ENCODE measurements at regions of chr6 and their contacts with region 1.

Region 1: GRCh38 chr6:68778356-68779020 is 143.4 kb downstream of the ADGRB3 start:
- DNase-seq: peak; percentile 53
- H3K4me3 Mint-ChIP-seq: no peak overlapping the region
- H3K27ac Mint-ChIP-seq: no peak overlapping the region
- H3K4me1 Mint-ChIP-seq: no peaks in the 10 kb centered on the region
- H3K27me3 Mint-ChIP-seq: peaks cover 67% of the 10 kb centered on the region
- CTCF ChIP-seq: peak; percentile 52

Region 2: DNA sequence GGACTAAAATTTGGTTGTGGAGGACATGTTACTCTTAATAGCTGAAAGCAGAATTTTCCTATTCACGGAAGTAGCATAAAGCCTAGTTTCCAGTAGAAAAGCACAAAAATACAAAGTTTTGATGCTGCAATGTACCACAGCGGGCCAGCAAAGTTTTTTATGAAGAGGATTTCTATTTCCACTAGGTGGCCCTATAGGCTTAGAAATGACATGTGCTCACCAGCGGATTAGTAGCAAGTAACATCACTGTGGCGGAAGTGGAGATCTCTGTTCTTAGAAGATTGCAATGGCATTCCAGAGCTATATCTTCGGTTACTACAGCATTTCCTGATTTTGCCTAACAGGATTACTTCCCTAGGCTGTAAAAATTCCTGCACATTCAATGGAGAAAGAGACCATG is 1852.4 kb before region 1 on chr6:
- CTCF ChIA-PET with region 1: no interaction called
- POLR2A ChIA-PET with region 1: no interaction called
- intact Hi-C with region 1: loop called (anchors 5 kb)
- DNase-seq: no peak
- H3K4me3 Mint-ChIP-seq: no peak overlapping the region
- H3K27ac Mint-ChIP-seq: no peak overlapping the region
- H3K4me1 Mint-ChIP-seq: peaks cover 13% of the 10 kb centered on the region
- H3K27me3 Mint-ChIP-seq: no peaks in the 10 kb centered on the region
- CTCF ChIP-seq: peak; percentile 28

Region 3: DNA sequence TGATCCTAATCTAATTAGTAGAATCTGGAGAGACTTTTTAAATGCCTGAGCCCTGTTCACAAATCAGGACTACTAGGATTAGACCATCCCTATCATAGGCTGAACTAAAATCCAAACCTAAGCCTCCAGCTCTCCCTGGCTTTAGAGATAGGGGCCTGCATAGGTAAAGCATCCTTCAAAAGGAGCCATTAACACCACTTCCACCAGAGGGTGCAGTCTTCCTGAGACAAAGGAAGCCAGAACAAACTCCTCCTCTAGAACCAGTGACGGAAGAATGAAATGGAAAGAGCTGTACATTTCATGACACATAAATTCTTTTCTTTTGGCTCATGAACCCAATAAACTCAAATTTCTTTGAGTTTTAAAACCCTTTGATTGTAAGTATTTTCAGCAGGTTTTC is 434.6 kb before region 1 on chr6:
- CTCF ChIA-PET with region 1: interaction called, 5 read pairs
- POLR2A ChIA-PET with region 1: no interaction called
- intact Hi-C with region 1: loop called (anchors 1 kb)
- DNase-seq: peak; percentile 70
- H3K4me3 Mint-ChIP-seq: no peak overlapping the region
- H3K27ac Mint-ChIP-seq: no peak overlapping the region
- H3K4me1 Mint-ChIP-seq: no peaks in the 10 kb centered on the region
- H3K27me3 Mint-ChIP-seq: no peaks in the 10 kb centered on the region
- CTCF ChIP-seq: peak; percentile 41

Region 4: DNA sequence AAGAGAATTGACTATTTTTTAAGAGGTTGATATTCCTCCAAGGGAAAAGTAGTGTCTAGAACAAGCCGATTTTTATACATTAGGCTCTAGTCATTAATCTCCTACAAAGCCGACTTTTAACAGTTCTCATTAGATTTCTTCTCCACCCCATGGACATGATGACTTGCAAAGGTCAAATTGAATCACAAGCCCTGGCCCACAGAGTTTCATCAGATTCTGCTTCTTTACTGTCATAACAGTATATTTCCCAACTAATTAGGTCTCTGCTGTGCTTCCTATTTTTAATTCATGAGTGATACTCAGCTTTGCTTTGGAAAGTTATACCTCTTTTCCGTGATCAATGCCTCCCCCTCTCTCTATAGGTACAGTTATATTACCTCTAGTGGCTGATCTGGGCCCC is 234.0 kb before region 1 on chr6:
- CTCF ChIA-PET with region 1: no interaction called
- POLR2A ChIA-PET with region 1: no interaction called
- intact Hi-C with region 1: no loop called
- DNase-seq: no peak
- H3K4me3 Mint-ChIP-seq: no peak overlapping the region
- H3K27ac Mint-ChIP-seq: no peak overlapping the region
- H3K4me1 Mint-ChIP-seq: no peaks in the 10 kb centered on the region
- H3K27me3 Mint-ChIP-seq: no peaks in the 10 kb centered on the region
- CTCF ChIP-seq: no peak

Region 5: GRCh38 chr6:68634726-68635411 is 143.6 kb before region 1 on chr6 and contains the start of gene ADGRB3:
- CTCF ChIA-PET with region 1: interaction called, 6 read pairs
- POLR2A ChIA-PET with region 1: interaction called, 4 read pairs
- intact Hi-C with region 1: loop called (anchors 1 kb)
- DNase-seq: no peak
- H3K4me3 Mint-ChIP-seq: peak within 1 kb of the TSS; percentile 69
- H3K27ac Mint-ChIP-seq: no peak within 1 kb of the TSS
- H3K4me1 Mint-ChIP-seq: peaks cover 6% of the 10 kb centered on the region
- H3K27me3 Mint-ChIP-seq: peaks cover 95% of the 10 kb centered on the region
- CTCF ChIP-seq: no peak
- total RNA-seq, gene ADGRB3: not detected in 2 replicates

Region 6: GRCh38 chr6:68990317-68990716 is 211.8 kb after region 1 on chr6:
- CTCF ChIA-PET with region 1: no interaction called
- POLR2A ChIA-PET with region 1: no interaction called
- intact Hi-C with region 1: no loop called
- DNase-seq: no peak
- H3K4me3 Mint-ChIP-seq: no peak overlapping the region
- H3K27ac Mint-ChIP-seq: no peak overlapping the region
- H3K4me1 Mint-ChIP-seq: no peaks in the 10 kb centered on the region
- H3K27me3 Mint-ChIP-seq: peaks cover 96% of the 10 kb centered on the region
- CTCF ChIP-seq: no peak

Region 7: GRCh38 chr6:69768664-69769063 is 990.2 kb after region 1 on chr6:
- CTCF ChIA-PET with region 1: no interaction called
- POLR2A ChIA-PET with region 1: no interaction called
- intact Hi-C with region 1: no loop called
- DNase-seq: no peak
- H3K4me3 Mint-ChIP-seq: no peak overlapping the region
- H3K27ac Mint-ChIP-seq: no peak overlapping the region
- H3K4me1 Mint-ChIP-seq: no peaks in the 10 kb centered on the region
- H3K27me3 Mint-ChIP-seq: no peaks in the 10 kb centered on the region
- CTCF ChIP-seq: no peak

Measured in MCF 10A (cell line).